ENCODE measurements at regions of chr5 and their contacts with region 1.

Region 1: DNA sequence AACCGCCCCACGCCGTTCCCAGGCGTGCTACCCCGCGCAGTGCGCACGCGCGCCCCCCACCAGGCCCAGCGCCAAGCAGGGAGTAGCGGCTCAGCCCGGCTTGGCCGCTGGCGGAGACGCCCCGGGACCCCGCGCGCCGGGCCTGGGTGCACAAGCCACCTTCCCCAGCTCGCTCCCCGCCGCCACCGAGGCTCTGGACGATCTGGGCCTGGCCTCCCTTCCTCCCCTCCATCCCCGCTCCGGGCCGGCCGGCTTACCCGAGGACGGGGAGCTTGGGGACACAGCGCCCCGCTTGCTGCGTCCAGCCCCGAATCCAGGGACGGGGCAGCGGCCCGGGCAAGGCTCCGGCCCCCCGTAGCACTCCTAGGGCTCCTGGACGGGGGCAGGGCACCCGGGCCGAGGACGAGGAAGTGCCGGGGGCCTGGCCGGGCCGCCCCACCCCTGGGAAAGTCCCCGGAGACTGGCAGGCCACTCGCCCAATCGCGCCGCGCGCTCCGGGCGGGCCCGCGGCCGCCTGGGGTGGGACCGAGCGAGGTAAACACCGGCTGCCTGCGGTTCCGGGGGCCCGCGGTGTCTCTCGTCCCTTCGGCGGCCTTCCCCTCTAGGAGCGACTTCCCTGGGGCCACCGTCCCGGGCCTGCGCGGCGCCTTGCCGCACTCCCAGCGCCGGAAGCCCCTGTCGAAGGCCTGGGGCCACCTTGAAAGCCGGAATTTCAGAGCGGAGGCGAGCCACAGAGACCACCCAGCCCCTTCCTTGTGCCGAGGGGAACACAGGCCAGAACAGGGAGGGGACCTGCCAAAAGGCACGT is at the start of gene TNIP1:
- DNase-seq: peak; percentile 94
- H3K4me3 Mint-ChIP-seq: peak within 1 kb of the TSS; percentile 83
- H3K27ac Mint-ChIP-seq: peak within 1 kb of the TSS; percentile 93
- H3K4me1 Mint-ChIP-seq: peaks cover 72% of the 10 kb centered on the region
- H3K27me3 Mint-ChIP-seq: no peaks in the 10 kb centered on the region
- total RNA-seq, gene TNIP1: 238 to 263 TPM

Region 2: GRCh38 chr5:150000256-150000989 is 1080.4 kb before region 1 on chr5 and contains the starts of genes HMGXB3 and TIGD6:
- CTCF ChIA-PET with region 1: no interaction called
- intact Hi-C with region 1: loop called (anchors 5 kb)
- DNase-seq: peak; percentile 91
- H3K4me3 Mint-ChIP-seq: peak within 1 kb of the TSS; percentile 86
- H3K27ac Mint-ChIP-seq: peak within 1 kb of the TSS; percentile 85
- H3K4me1 Mint-ChIP-seq: peaks cover 39% of the 10 kb centered on the region
- H3K27me3 Mint-ChIP-seq: no peaks in the 10 kb centered on the region
- total RNA-seq, gene HMGXB3: 24.3 to 26.8 TPM
- total RNA-seq, gene TIGD6: 2.6 to 2.7 TPM

Region 3: GRCh38 chr5:150778517-150779396 is 302.1 kb before region 1 on chr5 and contains the start of gene SMIM3:
- CTCF ChIA-PET with region 1: no interaction called
- intact Hi-C with region 1: loop called (anchors 2 kb)
- DNase-seq: peak; percentile 86
- H3K4me3 Mint-ChIP-seq: peak within 1 kb of the TSS; percentile 99
- H3K27ac Mint-ChIP-seq: peak within 1 kb of the TSS; percentile 93
- H3K4me1 Mint-ChIP-seq: peaks cover 48% of the 10 kb centered on the region
- H3K27me3 Mint-ChIP-seq: no peaks in the 10 kb centered on the region
- total RNA-seq, gene SMIM3: 32.9 to 37.4 TPM

Region 4: DNA sequence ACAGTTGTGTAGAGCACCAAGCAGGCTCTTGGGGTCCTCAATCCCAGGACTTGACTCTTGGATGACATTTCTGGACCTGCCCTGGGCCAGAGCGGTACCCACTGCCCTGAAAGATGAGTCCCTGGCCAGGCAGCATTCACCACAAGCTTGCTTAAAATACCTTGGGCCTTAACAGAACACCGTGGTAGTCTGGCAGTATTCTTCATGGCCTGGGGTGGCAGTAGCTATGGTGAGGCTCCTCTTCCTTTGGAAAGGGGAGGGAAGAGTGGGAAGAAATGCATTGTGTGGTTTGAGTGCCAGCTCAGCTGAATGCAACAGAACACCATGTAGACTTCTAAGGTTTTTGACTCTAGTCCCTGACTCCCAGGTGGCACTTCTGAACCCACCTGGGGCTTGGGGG is 263.9 kb before region 1 on chr5:
- CTCF ChIA-PET with region 1: no interaction called
- intact Hi-C with region 1: no loop called
- DNase-seq: no peak
- H3K4me3 Mint-ChIP-seq: no peak overlapping the region
- H3K27ac Mint-ChIP-seq: no peak overlapping the region
- H3K4me1 Mint-ChIP-seq: no peaks in the 10 kb centered on the region
- H3K27me3 Mint-ChIP-seq: no peaks in the 10 kb centered on the region

Region 5: DNA sequence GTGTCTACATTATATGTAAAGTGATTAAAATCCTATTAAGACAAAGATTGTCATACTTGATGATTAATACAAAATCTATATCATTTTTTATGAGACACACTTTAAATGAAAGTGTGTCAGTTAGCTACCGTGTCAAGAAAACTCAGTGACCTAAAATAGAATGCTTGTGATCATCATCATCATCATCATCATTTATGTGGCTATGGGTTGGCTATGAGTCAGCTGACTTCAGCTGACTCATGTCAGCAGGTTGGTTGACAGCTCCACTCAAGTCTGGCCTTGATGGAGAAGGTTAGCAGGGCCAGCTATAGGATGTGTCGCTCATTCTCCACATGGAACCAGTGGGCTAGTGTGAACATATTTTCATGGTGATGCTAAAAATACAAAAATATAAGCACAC is 132.3 kb before region 1 on chr5:
- CTCF ChIA-PET with region 1: no interaction called
- intact Hi-C with region 1: no loop called
- DNase-seq: no peak
- H3K4me3 Mint-ChIP-seq: no peak overlapping the region
- H3K27ac Mint-ChIP-seq: no peak overlapping the region
- H3K4me1 Mint-ChIP-seq: no peaks in the 10 kb centered on the region
- H3K27me3 Mint-ChIP-seq: peaks cover 21% of the 10 kb centered on the region

Region 6: GRCh38 chr5:151068433-151069197 is 12.2 kb before region 1 on chr5:
- CTCF ChIA-PET with region 1: interaction called, 3 read pairs
- intact Hi-C with region 1: loop called (anchors 1 kb)
- DNase-seq: peak; percentile 46
- H3K4me3 Mint-ChIP-seq: peak overlapping the region; percentile 12
- H3K27ac Mint-ChIP-seq: peak overlapping the region; percentile 77
- H3K4me1 Mint-ChIP-seq: peaks cover 93% of the 10 kb centered on the region
- H3K27me3 Mint-ChIP-seq: no peaks in the 10 kb centered on the region

Region 7: DNA sequence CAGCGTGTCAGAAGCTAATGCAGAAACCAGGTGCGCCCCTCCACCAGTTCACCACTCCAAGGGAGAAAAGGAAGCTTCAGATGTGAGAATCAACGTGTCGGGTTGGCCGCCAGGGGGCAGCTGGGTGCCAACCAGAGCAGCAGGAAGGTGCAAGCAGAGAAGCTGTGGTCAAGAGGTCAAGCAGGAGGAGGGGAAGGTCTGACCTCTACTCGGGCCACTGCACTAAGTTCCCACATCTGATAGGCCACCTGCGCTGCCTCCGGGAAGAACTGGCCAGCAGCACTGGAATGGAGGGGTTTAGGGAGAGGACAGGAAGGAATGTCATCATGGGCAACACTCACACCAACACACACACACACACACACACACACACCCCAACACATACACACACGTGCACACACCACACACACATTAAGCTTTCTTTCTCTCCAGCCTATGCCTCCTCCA is 45.4 kb after region 1 on chr5:
- CTCF ChIA-PET with region 1: interaction called, 3 read pairs
- intact Hi-C with region 1: loop called (anchors 2 kb)
- DNase-seq: peak; percentile 72
- H3K4me3 Mint-ChIP-seq: no peak overlapping the region
- H3K27ac Mint-ChIP-seq: peak overlapping the region; percentile 90
- H3K4me1 Mint-ChIP-seq: peaks cover 69% of the 10 kb centered on the region
- H3K27me3 Mint-ChIP-seq: no peaks in the 10 kb centered on the region

Region 8: DNA sequence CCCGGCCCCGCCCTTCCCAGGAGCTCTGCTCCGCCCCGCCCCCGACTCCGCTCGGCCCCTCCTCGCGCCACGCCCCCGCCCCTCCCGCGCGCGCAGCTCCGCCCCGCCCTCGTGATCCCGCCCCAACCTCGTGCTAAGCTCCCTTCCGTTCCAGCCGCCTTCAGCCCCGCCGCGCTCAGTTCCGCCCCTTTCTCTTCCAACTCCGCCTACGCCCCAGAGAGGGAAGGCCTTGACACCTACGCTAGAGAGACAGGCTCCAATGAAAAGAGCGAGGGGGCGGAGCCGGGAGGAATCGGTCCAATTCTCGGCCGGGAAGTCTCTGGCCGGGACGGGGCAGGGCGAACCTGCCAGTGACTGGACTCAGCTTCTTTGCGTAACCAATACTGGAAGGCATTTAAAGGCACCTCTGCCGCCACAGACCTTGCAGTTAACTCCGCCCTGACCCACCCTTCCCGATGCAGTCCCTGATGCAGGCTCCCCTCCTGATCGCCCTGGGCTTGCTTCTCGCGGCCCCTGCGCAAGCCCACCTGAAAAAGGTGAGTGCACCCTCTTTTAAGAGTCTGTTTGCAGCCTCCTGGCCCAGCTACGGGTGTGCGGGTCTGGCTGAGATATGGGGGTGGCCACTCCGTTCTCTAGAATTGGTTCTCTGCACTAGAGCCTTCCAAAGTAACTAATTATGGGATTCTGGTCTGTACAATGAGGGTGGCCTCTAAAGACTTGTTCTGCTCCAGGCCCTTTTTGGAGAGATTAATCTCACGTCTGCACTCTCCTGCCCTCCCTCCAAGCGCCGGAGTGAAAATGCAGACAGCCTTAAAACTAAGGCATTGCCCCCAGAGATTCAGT is 172.2 kb after region 1 on chr5 and contains the start of gene GM2A:
- CTCF ChIA-PET with region 1: no interaction called
- intact Hi-C with region 1: loop called (anchors 2 kb)
- DNase-seq: peak; percentile 99
- H3K4me3 Mint-ChIP-seq: peak within 1 kb of the TSS; percentile 89
- H3K27ac Mint-ChIP-seq: peak within 1 kb of the TSS; percentile 90
- H3K4me1 Mint-ChIP-seq: peaks cover 43% of the 10 kb centered on the region
- H3K27me3 Mint-ChIP-seq: no peaks in the 10 kb centered on the region
- total RNA-seq, gene GM2A: 21.1 to 21.8 TPM

Region 9: DNA sequence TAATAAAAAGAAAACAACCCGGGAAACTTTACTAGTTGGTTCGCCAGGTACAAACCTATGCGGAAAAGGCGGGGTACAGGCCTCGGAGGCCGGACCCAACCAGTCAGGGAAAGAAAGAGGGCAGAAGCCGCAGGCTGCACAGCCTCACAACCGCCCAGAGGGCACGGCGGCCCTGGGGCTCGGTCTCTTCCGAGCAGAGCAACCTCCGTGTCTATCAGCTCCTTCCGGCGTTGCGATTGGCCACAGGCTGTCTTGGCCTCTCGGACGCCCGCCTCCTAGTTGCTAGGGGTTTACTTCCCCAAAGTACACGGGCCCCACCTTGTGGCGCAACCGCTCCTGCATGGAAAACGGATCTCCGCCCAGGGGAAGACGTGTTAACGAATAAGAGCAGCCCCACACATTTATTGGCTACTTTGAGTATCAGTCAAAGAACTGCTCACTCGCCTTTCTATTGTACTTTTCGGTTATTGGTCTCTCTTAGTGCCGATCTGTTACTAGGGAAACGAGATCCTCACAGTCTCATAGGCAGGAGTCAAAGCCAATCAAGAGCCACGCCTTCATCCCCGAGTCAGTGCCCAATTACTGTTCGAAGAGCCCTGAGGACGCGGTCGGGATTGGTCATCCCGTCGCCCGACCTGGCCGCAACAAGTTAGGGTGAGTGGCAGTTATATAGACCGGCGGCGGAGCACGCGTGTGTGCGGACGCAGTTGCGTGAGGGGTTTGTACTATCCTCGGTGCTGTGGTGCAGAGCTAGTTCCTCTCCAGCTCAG is 690.6 kb after region 1 on chr5 and contains the start of gene G3BP1:
- CTCF ChIA-PET with region 1: no interaction called
- intact Hi-C with region 1: loop called (anchors 5 kb)
- DNase-seq: peak; percentile 100
- H3K4me3 Mint-ChIP-seq: peak within 1 kb of the TSS; percentile 77
- H3K27ac Mint-ChIP-seq: peak within 1 kb of the TSS; percentile 70
- H3K4me1 Mint-ChIP-seq: peaks cover 33% of the 10 kb centered on the region
- H3K27me3 Mint-ChIP-seq: no peaks in the 10 kb centered on the region
- total RNA-seq, gene G3BP1: 220 to 241 TPM